GM12878 (cell line): ENCODE measurements at regions of chr11 and their contacts with region 1.

Region 1: GRCh38 chr11:11946180-11946579 is 62.2 kb downstream of the DKK3 start:
- DNase-seq: no peak
- ATAC-seq: no peak
- H3K4me3 ChIP-seq: no peak overlapping the region
- H3K27ac ChIP-seq: no peak overlapping the region
- H3K4me1 ChIP-seq: no peaks in the 10 kb centered on the region
- H3K27me3 ChIP-seq: no peaks in the 10 kb centered on the region
- CTCF ChIP-seq: no peak
- EP300 ChIP-seq: no peak
- POLR2A ChIP-seq: no peak
- RAD21 ChIP-seq: no peak

Region 2: GRCh38 chr11:11966826-11967668 is 20.9 kb after region 1 on chr11:
- CTCF ChIA-PET with region 1: interaction called, 12 read pairs
- POLR2A ChIA-PET with region 1: no interaction called
- RAD21 ChIA-PET with region 1: no interaction called
- SMC1A ChIA-PET with region 1: no interaction called
- in situ Hi-C with region 1: no loop called
- intact Hi-C with region 1: no loop called
- DNase-seq: no peak
- ATAC-seq: peak; percentile 98
- H3K4me3 ChIP-seq: no peak overlapping the region
- H3K27ac ChIP-seq: no peak overlapping the region
- H3K4me1 ChIP-seq: no peaks in the 10 kb centered on the region
- H3K27me3 ChIP-seq: no peaks in the 10 kb centered on the region; a peak in 3 of 4 replicates
- CTCF ChIP-seq: peak; percentile 83 to 90 (median 84)
- EP300 ChIP-seq: no peak
- POLR2A ChIP-seq: no peak
- RAD21 ChIP-seq: peak; percentile 55

Region 3: GRCh38 chr11:12029738-12030363 is 83.7 kb after region 1 on chr11:
- CTCF ChIA-PET with region 1: no interaction called
- POLR2A ChIA-PET with region 1: no interaction called
- RAD21 ChIA-PET with region 1: no interaction called
- SMC1A ChIA-PET with region 1: no interaction called
- in situ Hi-C with region 1: no loop called
- intact Hi-C with region 1: no loop called
- DNase-seq: no peak
- ATAC-seq: no peak
- H3K4me3 ChIP-seq: no peak overlapping the region
- H3K27ac ChIP-seq: no peak overlapping the region
- H3K4me1 ChIP-seq: peaks cover 3% of the 10 kb centered on the region; the same call in 1 of the 2 replicates
- H3K27me3 ChIP-seq: no peaks in the 10 kb centered on the region
- CTCF ChIP-seq: no peak
- EP300 ChIP-seq: no peak
- POLR2A ChIP-seq: no peak
- RAD21 ChIP-seq: no peak